Motor neuron (in vitro differentiated cells): ENCODE measurements at regions of chr2 and their contacts with region 1.

Region 1: GRCh38 chr2:240851078-240851991 is 17.3 kb upstream of the AGXT start:
- ATAC-seq: peak; percentile 87 to 99 (median 91)
- H3K4me3 ChIP-seq: no peak overlapping the region
- H3K27ac ChIP-seq: no peak overlapping the region
- H3K4me1 ChIP-seq: peaks cover 0 to 6% of the 10 kb centered on the region in 2 donors

Region 2: GRCh38 chr2:240434728-240435456 is 416.4 kb before region 1 on chr2:
- in situ Hi-C with region 1: no loop called
- ATAC-seq: peak; percentile 58 to 79 (median 73)
- H3K4me3 ChIP-seq: peak overlapping the region; percentile 63 to 88 (median 72)
- H3K27ac ChIP-seq: peak overlapping the region; percentile 48 to 69
- H3K4me1 ChIP-seq: peaks cover 17 to 22% of the 10 kb centered on the region in 2 donors

Region 3: DNA sequence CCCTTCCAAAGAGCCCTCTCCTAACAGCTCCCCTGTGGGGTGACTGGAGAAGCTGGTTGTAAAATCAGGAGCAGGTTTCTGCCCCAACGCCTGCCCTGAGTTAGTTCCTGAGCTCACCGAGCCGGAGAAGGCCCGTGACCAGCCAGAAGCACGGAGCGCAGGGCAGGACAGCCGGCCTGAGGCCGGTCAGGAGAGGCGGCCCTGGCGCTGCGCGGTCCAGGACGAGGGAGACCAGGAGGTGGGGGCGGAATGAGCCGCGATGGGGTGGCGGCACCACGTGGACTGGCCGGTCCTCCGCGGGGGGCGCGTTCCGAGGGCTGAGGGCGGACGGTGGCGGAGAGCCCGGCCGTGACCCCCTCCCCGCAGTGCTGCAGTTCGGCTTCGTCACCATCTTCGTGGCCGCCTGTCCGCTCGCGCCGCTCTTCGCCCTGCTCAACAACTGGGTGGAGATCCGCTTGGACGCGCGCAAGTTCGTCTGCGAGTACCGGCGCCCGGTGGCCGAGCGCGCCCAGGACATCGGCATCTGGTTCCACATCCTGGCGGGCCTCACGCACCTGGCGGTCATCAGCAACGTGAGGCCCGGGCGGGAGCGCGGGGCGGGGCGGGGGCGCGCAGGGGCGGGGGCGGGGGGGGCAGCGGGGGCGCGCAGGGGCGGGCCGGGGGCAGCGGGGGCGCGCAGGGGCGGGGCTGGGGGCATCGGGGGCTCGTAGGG is 366.1 kb after region 1 on chr2:
- in situ Hi-C with region 1: loop called in 1 of 9 experiments (anchors 25 kb)
- ATAC-seq: peak; percentile 77 to 91 (median 86)
- H3K4me3 ChIP-seq: peak overlapping the region; percentile 26 to 48 (median 35)
- H3K27ac ChIP-seq: peak overlapping the region; percentile 58
- H3K4me1 ChIP-seq: peaks cover 9% of the 10 kb centered on the region in 2 donors